Right ventricle myocardium inferior (tissue), 1 donor: ENCODE measurements at regions of chr21 and their contacts with region 1.

Region 1: GRCh38 chr21:27564684-27565301 is 597.9 kb upstream of the ADAMTS5 start:
- DNase-seq: no peak
- ATAC-seq: peak; percentile 70

Region 2: GRCh38 chr21:27362249-27362648 is 202.5 kb before region 1 on chr21:
- intact Hi-C with region 1: loop called (anchors 1 kb)
- DNase-seq: no peak
- ATAC-seq: no peak

Region 3: GRCh38 chr21:27694667-27695066 is 129.9 kb after region 1 on chr21:
- intact Hi-C with region 1: loop called (anchors 5 kb)
- DNase-seq: no peak
- ATAC-seq: no peak